ENCODE measurements at regions of chr16 and their contacts with region 1.

Region 1: DNA sequence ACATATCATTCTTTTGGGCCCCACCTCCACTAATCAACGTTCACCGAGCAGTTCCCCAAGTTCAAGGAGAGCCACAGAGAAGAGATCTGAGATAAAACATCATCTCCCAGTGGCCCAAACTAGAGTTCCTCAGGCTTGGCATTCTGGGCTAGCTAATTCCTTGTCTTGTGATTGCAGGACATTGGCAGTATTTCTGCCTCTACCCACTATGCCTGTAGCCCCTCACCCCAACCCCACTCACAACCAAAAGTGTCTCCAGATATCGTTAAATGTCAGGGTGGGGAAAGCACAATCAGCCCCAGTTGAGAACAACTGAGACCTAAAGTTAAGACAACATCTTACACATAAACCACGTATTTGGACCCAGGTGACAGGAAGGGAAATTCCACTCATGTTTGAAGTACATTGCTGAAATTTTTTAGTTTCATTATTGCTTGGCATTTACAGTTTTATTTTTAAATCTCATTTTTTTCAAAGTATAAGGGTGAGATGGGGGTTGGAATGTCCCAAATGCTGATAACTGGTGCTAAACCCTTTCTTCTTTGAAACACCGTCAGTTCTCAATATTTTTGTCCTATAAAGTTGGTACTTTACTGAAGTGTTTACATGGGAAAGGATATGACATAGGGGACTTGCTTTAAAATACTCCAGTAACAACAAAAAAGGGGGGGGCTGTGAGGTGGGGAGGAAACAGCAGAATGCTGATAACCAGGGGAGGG is 13.6 kb downstream of the ZC3H7A start:
- DNase-seq: peak; percentile 75
- ATAC-seq: peak; percentile 82
- H3K4me3 Mint-ChIP-seq: peak overlapping the region; percentile 75
- H3K27ac Mint-ChIP-seq: peak overlapping the region; percentile 99
- H3K4me1 Mint-ChIP-seq: peaks cover 64% of the 10 kb centered on the region
- H3K27me3 Mint-ChIP-seq: no peaks in the 10 kb centered on the region
- CTCF ChIP-seq: no peak

Region 2: GRCh38 chr16:11742539-11743307 is 40.8 kb before region 1 on chr16 and contains the start of gene TXNDC11:
- CTCF ChIA-PET with region 1: interaction called, 3 read pairs
- POLR2A ChIA-PET with region 1: interaction called, 13 read pairs
- intact Hi-C with region 1: no loop called
- DNase-seq: peak; percentile 99
- ATAC-seq: peak; percentile 95
- H3K4me3 Mint-ChIP-seq: peak within 1 kb of the TSS; percentile 88
- H3K27ac Mint-ChIP-seq: peak within 1 kb of the TSS; percentile 95
- H3K4me1 Mint-ChIP-seq: peaks cover 44% of the 10 kb centered on the region
- H3K27me3 Mint-ChIP-seq: no peaks in the 10 kb centered on the region
- CTCF ChIP-seq: no peak
- total RNA-seq, gene TXNDC11: 21.7 to 24.4 TPM

Region 3: GRCh38 chr16:11797166-11797956 is 13.9 kb after region 1 on chr16 and contains the start of gene ZC3H7A:
- CTCF ChIA-PET with region 1: interaction called, 125 read pairs
- POLR2A ChIA-PET with region 1: interaction called, 55 read pairs
- intact Hi-C with region 1: loop called (anchors 2 kb)
- DNase-seq: peak; percentile 95
- ATAC-seq: peak; percentile 98
- H3K4me3 Mint-ChIP-seq: peak within 1 kb of the TSS; percentile 89
- H3K27ac Mint-ChIP-seq: peak within 1 kb of the TSS; percentile 96
- H3K4me1 Mint-ChIP-seq: peaks cover 61% of the 10 kb centered on the region
- H3K27me3 Mint-ChIP-seq: no peaks in the 10 kb centered on the region
- CTCF ChIP-seq: peak; percentile 74
- total RNA-seq, gene ZC3H7A: 62.3 to 67.8 TPM

Region 4: GRCh38 chr16:11851294-11852091 is 68.0 kb after region 1 on chr16 and contains the start of gene RSL1D1:
- CTCF ChIA-PET with region 1: no interaction called
- POLR2A ChIA-PET with region 1: interaction called, 11 read pairs
- intact Hi-C with region 1: no loop called
- DNase-seq: peak; percentile 92
- ATAC-seq: peak; percentile 87
- H3K4me3 Mint-ChIP-seq: peak within 1 kb of the TSS; percentile 96
- H3K27ac Mint-ChIP-seq: peak within 1 kb of the TSS; percentile 95
- H3K4me1 Mint-ChIP-seq: peaks cover 47% of the 10 kb centered on the region
- H3K27me3 Mint-ChIP-seq: no peaks in the 10 kb centered on the region
- CTCF ChIP-seq: no peak
- total RNA-seq, gene RSL1D1: 344 TPM

Region 5: GRCh38 chr16:11862489-11862888 is 79.0 kb after region 1 on chr16:
- CTCF ChIA-PET with region 1: no interaction called
- POLR2A ChIA-PET with region 1: no interaction called
- intact Hi-C with region 1: no loop called
- DNase-seq: no peak
- ATAC-seq: no peak
- H3K4me3 Mint-ChIP-seq: no peak overlapping the region
- H3K27ac Mint-ChIP-seq: no peak overlapping the region
- H3K4me1 Mint-ChIP-seq: peaks cover 18% of the 10 kb centered on the region
- H3K27me3 Mint-ChIP-seq: no peaks in the 10 kb centered on the region
- CTCF ChIP-seq: no peak

Measured in activated CD8-positive, alpha-beta T cell treated with anti-CD3 and anti-CD28 coated beads for 36 hours (primary cell).